Esophagus muscularis mucosa (tissue), 4 donors: ENCODE measurements at regions of chr1 and their contacts with region 1.

Region 1: DNA sequence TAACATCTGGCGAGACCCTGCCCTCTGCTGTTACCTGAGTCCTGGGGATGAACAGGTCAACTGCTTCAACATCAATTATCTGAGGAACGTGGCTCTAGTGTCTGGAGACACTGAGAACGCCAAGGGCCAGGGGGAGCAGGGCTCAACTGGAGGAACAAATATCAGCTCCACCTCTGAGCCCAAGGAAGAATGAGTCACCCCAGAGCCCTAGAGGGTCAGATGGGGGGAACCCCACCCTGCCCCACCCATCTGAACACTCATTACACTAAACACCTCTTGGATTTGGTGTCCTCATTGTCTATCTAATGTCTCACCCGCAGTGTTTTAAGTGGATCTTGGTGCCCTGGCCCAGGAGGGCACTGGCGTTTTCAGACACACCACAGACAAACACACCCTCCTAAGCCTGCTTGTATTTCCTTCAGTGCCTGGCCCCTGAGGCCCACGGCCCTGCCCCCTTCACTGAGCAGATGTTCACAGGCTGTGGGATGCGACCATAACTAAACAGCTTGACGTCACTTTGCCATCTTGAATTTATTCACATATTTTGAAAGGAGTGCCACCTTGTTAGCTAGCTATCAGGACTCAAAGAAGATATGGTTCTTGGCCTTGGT is 2.2 kb upstream of the FALEC start:
- DNase-seq: no peak
- H3K4me3 ChIP-seq: no peak overlapping the region
- H3K27ac ChIP-seq: no peak overlapping the region
- H3K4me1 ChIP-seq: peaks cover 12 to 44% (median 42%) of the 10 kb centered on the region in 4 donors
- H3K27me3 ChIP-seq: no peaks in the 10 kb centered on the region
- CTCF ChIP-seq: no peak
- EP300 ChIP-seq: no peak
- POLR2A ChIP-seq: no peak

Region 2: DNA sequence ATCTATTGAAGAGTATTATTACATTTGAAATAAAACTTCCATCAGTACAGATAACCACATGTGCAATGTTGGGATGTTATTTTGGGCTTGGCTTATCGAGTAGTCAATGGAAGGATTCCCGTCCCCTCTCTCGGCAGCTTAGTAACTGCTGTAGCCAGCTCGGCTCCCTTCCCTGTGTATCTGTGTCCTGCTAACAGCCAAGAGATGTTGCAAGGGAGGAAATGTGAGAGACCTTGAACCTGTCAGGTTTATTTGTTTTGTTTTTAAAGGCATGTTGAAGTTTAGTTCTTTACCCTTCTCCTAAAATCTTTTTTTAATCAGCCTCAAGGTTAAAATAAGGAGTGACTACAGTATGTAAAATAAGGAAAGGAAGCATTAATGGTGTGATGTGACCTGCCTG is 39.7 kb before region 1 on chr1:
- intact Hi-C with region 1: loop called (anchors 5 kb)
- DNase-seq: no peak
- H3K4me3 ChIP-seq: no peak overlapping the region
- H3K27ac ChIP-seq: peak overlapping the region in 1 of 4 donors; percentile 13
- H3K4me1 ChIP-seq: peaks cover 11 to 26% (median 20%) of the 10 kb centered on the region in 4 donors
- H3K27me3 ChIP-seq: no peaks in the 10 kb centered on the region
- CTCF ChIP-seq: no peak
- EP300 ChIP-seq: no peak
- POLR2A ChIP-seq: no peak

Region 3: DNA sequence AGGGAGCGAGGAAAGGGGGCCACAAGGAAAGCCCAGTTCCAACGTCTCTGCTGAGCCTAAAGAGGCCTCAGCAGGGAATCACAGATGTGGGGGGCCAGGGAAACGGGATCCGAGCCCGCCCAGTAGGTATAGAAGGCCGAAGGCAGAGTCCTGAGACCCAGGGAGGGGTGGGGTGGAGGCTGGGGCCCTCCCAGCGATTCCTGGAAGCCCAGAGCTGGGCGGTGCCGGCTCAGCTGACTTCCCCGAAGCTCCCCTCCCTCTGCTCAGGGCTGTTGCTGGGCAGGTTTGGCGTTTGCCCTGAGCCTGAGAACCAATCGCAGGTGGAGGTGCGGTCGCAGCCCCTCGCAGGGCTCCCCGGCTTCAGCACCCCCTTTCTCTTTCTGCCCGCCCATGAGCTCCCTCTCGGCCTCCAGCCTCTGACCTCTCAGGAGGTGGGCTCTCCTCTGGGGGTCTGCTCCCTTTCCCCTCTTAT is 48.6 kb after region 1 on chr1:
- intact Hi-C with region 1: no loop called
- DNase-seq: peak; percentile 98
- H3K4me3 ChIP-seq: peak overlapping the region; percentile 59 to 64 (median 61)
- H3K27ac ChIP-seq: peak overlapping the region; percentile 93 to 100 (median 98)
- H3K4me1 ChIP-seq: peaks cover 76 to 95% (median 88%) of the 10 kb centered on the region in 4 donors
- H3K27me3 ChIP-seq: no peaks in the 10 kb centered on the region
- CTCF ChIP-seq: no peak
- EP300 ChIP-seq: peak; percentile 92
- POLR2A ChIP-seq: no peak

Region 4: DNA sequence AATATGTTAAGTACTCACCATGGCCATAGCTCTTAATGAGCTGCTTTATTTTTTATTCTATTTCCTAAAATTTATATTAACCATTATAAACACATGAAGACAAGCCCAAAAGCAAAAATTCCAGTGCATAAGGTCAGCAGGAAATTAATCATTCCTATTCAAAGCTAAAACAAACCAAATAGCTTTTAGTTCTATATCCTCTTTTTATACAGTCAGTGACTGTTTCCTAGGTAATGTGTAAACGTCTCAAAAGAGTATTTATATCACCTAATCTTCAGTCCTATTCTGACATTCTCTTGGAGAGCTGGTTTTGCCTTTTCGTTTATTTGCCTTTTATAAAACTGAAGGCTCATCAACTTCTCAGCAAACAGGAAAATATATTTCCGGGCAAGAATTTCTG is 179.3 kb after region 1 on chr1:
- intact Hi-C with region 1: no loop called
- DNase-seq: no peak
- H3K4me3 ChIP-seq: no peak overlapping the region
- H3K27ac ChIP-seq: peak overlapping the region in 3 of 4 donors; percentile 12 to 51 (median 14)
- H3K4me1 ChIP-seq: peaks cover 11 to 39% (median 34%) of the 10 kb centered on the region in 4 donors
- H3K27me3 ChIP-seq: no peaks in the 10 kb centered on the region
- CTCF ChIP-seq: no peak
- EP300 ChIP-seq: no peak
- POLR2A ChIP-seq: no peak